Mammary epithelial cell (primary cell): ENCODE measurements at regions of chr2 and their contacts with region 1.

Region 1: DNA sequence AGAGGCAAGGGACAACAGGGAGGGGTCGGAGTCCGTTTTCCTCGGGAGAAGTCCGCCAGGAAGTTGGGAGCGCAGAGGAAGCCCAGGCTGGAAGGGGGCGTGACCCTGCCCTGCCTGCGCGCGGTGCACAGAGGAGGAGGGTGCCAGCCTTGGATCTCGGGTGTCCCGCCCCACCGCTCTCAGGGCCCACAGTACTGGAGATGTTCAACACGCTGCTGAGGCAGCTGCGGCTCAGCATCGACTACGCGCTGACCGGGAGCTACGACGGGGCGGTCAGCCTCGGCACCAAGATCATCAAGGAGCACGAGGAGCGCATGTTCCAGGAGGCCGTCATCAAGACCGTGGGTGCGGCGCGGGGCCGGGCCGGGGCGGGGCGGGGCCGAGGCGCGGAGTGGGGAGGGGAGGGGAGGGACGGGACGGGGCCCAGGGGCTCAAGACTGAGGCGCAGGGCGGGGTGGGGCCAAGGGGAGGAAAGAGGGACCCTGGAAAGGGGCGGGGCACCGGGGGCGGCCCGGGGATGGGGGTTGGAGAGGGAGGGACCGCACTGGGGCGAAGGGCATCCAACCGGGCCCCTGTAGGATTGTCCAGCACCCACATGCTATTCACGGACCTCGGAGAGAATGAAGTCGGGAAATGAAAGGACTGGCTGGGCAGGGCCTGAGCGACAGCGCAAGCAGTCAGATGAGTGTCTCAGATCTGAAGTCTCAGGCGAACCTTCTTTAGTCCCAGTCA is 36.6 kb downstream of the POMC start:
- DNase-seq: no peak
- H3K4me3 ChIP-seq: peak overlapping the region in 2 of 3 experiments; percentile 11 to 14
- H3K27ac ChIP-seq: no peak overlapping the region
- H3K4me1 ChIP-seq: peaks cover 5% of the 10 kb centered on the region
- H3K27me3 ChIP-seq: peaks cover 15% of the 10 kb centered on the region
- CTCF ChIP-seq: no peak

Region 2: GRCh38 chr2:24792874-24793760 is 338.6 kb before region 1 on chr2 and contains the starts of genes CENPO and PTRHD1:
- CTCF ChIA-PET with region 1: interaction called, 4 read pairs
- dilution Hi-C with region 1: no loop called
- in situ Hi-C with region 1: no loop called
- intact Hi-C with region 1: loop called (anchors 5 kb)
- DNase-seq: peak; percentile 95
- H3K4me3 ChIP-seq: peak within 1 kb of the TSS; percentile 64 to 78 (median 71)
- H3K27ac ChIP-seq: peak within 1 kb of the TSS; percentile 88
- H3K4me1 ChIP-seq: peaks cover 24% of the 10 kb centered on the region
- H3K27me3 ChIP-seq: no peaks in the 10 kb centered on the region
- CTCF ChIP-seq: peak; percentile 55 to 79
- total RNA-seq, gene CENPO: 7.2 to 27.7 TPM
- total RNA-seq, gene PTRHD1: 14.8 to 28.3 TPM

Region 3: DNA sequence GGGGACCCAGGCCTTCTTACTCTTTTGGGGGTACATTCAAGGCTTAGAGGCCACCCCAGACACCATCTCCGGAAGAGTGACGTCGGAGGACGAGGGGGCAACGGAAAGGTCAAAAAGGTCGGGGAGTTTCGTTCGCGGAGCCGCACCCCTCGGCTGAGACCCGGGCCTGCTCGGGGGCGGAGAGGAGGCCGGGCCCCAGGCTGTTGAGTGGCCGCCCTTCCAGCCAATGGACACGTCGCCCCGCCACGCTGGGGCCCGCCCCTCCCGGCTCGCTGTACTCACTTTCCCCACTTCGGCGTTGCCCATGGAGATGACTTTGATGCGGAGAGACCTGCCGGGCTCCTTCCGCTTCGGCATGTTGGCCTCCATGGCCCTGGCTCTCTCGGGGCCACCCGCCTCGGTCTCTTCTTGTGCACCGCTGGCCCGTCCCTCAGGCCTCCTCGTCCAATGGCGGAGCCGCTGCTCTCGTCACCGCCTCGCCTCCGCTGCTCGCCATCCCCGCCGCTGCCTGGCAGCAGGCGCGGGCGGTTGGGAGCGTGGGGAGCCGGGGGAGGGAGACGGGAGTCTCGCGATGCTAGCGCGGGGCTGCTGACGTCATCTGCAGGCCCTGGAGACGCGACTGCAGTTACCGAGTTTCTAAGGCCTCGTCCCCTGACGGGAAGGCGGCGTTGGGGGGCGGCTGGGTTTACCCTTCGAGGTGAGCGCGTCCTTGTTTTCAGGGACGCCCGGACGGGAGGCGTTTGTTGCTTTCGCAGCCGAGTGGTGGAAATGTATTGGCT is 160.0 kb before region 1 on chr2 and contains the start of gene DNAJC27:
- CTCF ChIA-PET with region 1: interaction called, 10 read pairs
- dilution Hi-C with region 1: no loop called
- in situ Hi-C with region 1: loop called in 1 of 2 experiments (anchors 5 kb)
- intact Hi-C with region 1: loop called (anchors 1 kb)
- DNase-seq: peak; percentile 98
- H3K4me3 ChIP-seq: peak within 1 kb of the TSS; percentile 69 to 90 (median 83)
- H3K27ac ChIP-seq: peak within 1 kb of the TSS; percentile 98
- H3K4me1 ChIP-seq: peaks cover 4% of the 10 kb centered on the region
- H3K27me3 ChIP-seq: no peaks in the 10 kb centered on the region
- CTCF ChIP-seq: no peak
- total RNA-seq, gene DNAJC27: 4.4 to 5.0 TPM

Region 4: GRCh38 chr2:24984912-24985311 is 146.8 kb before region 1 on chr2:
- CTCF ChIA-PET with region 1: interaction called, 13 read pairs
- dilution Hi-C with region 1: no loop called
- in situ Hi-C with region 1: no loop called
- intact Hi-C with region 1: no loop called
- DNase-seq: no peak
- H3K4me3 ChIP-seq: no peak overlapping the region
- H3K27ac ChIP-seq: no peak overlapping the region
- H3K4me1 ChIP-seq: no peaks in the 10 kb centered on the region
- H3K27me3 ChIP-seq: peaks cover 5% of the 10 kb centered on the region
- CTCF ChIP-seq: no peak

Region 5: GRCh38 chr2:25201265-25201664 is 69.5 kb after region 1 on chr2:
- CTCF ChIA-PET with region 1: no interaction called
- dilution Hi-C with region 1: no loop called
- in situ Hi-C with region 1: no loop called
- intact Hi-C with region 1: loop called (anchors 2 kb)
- DNase-seq: no peak
- H3K4me3 ChIP-seq: no peak overlapping the region
- H3K27ac ChIP-seq: no peak overlapping the region
- H3K4me1 ChIP-seq: peaks cover 8% of the 10 kb centered on the region
- H3K27me3 ChIP-seq: peaks cover 2% of the 10 kb centered on the region
- CTCF ChIP-seq: peak in 1 of 2 donors; percentile 29